Activated CD4-positive, alpha-beta memory T cell treated with anti-CD3 and anti-CD28 coated beads for 36 hours (primary cell): ENCODE measurements at regions of chr15 and their contacts with region 1.

Region 1: GRCh38 chr15:41116116-41116871 is at the start of gene INO80:
- DNase-seq: peak; percentile 98
- H3K4me3 Mint-ChIP-seq: peak within 1 kb of the TSS; percentile 91
- H3K27ac Mint-ChIP-seq: peak within 1 kb of the TSS; percentile 98
- H3K4me1 Mint-ChIP-seq: peaks cover 12% of the 10 kb centered on the region
- H3K27me3 Mint-ChIP-seq: no peaks in the 10 kb centered on the region
- total RNA-seq, gene INO80: 19.9 to 22.8 TPM

Region 2: DNA sequence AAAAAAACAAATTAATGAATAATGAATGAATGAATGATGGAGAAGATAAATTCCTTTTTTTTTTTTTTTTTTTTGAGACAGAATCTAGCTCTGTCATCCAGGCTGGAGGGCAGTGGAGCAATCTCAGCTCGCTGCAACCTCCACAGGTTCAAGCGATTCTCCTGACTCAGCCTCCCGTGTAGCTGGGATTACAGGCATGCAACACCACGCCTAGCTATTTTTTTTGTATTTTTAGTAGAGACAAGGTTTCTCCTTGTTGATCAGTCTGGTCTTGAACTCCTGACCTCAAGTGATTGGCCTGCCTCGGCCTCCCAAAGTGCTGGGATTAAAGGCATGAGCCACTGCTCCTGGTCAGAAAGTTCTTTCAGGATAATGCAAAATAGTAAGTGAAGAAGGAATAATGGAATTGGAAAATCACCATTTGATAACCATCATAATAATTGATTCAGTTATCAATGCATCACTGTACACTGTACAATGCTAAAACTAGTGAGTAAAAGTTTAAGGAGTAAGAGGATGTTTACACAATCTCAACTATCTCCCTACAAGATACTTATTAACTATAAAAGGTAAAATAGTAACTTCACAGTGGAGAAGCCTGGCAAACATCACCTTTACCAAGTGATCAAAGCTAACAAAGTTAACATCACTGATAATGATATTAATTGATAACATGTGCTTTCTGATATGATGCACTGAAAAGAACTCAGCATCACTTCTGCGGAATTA is 12.0 kb after region 1 on chr15:
- CTCF ChIA-PET with region 1: no interaction called
- POLR2A ChIA-PET with region 1: no interaction called
- intact Hi-C with region 1: no loop called
- DNase-seq: no peak
- H3K4me3 Mint-ChIP-seq: no peak overlapping the region
- H3K27ac Mint-ChIP-seq: no peak overlapping the region
- H3K4me1 Mint-ChIP-seq: no peaks in the 10 kb centered on the region
- H3K27me3 Mint-ChIP-seq: peaks cover 7% of the 10 kb centered on the region

Region 3: GRCh38 chr15:41154412-41154811 is 38.1 kb after region 1 on chr15:
- CTCF ChIA-PET with region 1: no interaction called
- POLR2A ChIA-PET with region 1: interaction called, 3 read pairs
- intact Hi-C with region 1: loop called (anchors 2 kb)
- DNase-seq: no peak
- H3K4me3 Mint-ChIP-seq: no peak overlapping the region
- H3K27ac Mint-ChIP-seq: no peak overlapping the region
- H3K4me1 Mint-ChIP-seq: peaks cover 15% of the 10 kb centered on the region
- H3K27me3 Mint-ChIP-seq: no peaks in the 10 kb centered on the region

Region 4: GRCh38 chr15:41309226-41309905 is 193.1 kb after region 1 on chr15:
- CTCF ChIA-PET with region 1: no interaction called
- POLR2A ChIA-PET with region 1: no interaction called
- intact Hi-C with region 1: no loop called
- DNase-seq: no peak
- H3K4me3 Mint-ChIP-seq: no peak overlapping the region
- H3K27ac Mint-ChIP-seq: no peak overlapping the region
- H3K4me1 Mint-ChIP-seq: no peaks in the 10 kb centered on the region
- H3K27me3 Mint-ChIP-seq: no peaks in the 10 kb centered on the region

Region 5: GRCh38 chr15:41331833-41332787 is 215.8 kb after region 1 on chr15 and contains the start of gene OIP5:
- CTCF ChIA-PET with region 1: no interaction called
- POLR2A ChIA-PET with region 1: interaction called, 5 read pairs
- intact Hi-C with region 1: loop called (anchors 1 kb)
- DNase-seq: peak; percentile 99
- H3K4me3 Mint-ChIP-seq: peak within 1 kb of the TSS; percentile 99
- H3K27ac Mint-ChIP-seq: peak within 1 kb of the TSS; percentile 97
- H3K4me1 Mint-ChIP-seq: peaks cover 23% of the 10 kb centered on the region
- H3K27me3 Mint-ChIP-seq: no peaks in the 10 kb centered on the region
- total RNA-seq, gene OIP5: 11.1 to 13.0 TPM